CD4-positive, alpha-beta memory T cell (primary cell): ENCODE measurements at regions of chr11 and their contacts with region 1.

Region 1: DNA sequence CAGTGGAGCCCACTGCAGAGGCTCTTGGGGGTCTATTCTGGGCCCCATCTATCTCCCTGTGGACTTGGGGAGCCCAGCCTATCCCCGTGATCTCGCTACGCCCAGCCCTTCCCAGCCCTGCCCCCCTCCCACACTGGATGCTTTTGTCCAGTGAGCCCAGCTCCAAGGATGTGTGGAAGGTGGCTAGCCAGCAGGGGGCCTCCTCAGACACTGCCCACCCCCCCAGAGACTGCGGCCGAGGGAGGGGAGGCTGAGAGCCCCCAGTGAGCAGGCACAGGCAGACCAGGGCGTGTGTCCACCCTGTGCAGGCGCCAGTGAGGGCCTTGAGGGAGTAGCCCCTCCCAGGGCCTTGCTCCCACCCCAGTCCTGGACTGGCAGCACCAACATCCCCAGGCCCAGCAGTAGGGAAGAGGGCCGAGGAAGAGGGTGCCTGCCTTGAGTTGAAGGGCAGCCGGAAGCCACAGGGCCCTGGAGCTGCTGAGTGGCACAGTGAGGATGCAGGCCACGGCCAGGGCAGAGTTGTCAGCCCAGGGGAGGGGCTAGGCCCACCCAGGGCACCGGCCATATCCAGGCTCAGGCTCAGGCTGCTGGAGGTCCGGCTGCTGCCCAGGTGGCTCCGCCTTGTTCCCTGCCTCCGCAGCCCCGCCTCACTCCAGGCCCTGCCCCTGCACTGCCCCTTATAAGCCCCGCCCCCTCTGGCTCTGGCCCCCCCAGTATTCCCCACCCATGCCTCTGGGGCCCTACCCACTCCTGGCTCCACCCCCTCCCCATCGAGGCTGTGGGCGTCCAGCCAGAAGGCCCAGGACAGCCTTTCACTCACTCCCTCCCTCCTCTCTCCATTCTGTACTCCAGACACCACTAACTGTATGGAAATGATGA is 28.0 kb downstream of the MOB2 start:
- DNase-seq: no peak
- H3K4me3 ChIP-seq: no peak overlapping the region
- H3K4me3 Mint-ChIP-seq: no peak overlapping the region
- H3K27ac ChIP-seq: no peak overlapping the region
- H3K27ac Mint-ChIP-seq: no peak overlapping the region
- H3K4me1 ChIP-seq: no peaks in the 10 kb centered on the region
- H3K4me1 Mint-ChIP-seq: no peaks in the 10 kb centered on the region
- H3K27me3 ChIP-seq: no peaks in the 10 kb centered on the region
- H3K27me3 Mint-ChIP-seq: no peaks in the 10 kb centered on the region

Region 2: DNA sequence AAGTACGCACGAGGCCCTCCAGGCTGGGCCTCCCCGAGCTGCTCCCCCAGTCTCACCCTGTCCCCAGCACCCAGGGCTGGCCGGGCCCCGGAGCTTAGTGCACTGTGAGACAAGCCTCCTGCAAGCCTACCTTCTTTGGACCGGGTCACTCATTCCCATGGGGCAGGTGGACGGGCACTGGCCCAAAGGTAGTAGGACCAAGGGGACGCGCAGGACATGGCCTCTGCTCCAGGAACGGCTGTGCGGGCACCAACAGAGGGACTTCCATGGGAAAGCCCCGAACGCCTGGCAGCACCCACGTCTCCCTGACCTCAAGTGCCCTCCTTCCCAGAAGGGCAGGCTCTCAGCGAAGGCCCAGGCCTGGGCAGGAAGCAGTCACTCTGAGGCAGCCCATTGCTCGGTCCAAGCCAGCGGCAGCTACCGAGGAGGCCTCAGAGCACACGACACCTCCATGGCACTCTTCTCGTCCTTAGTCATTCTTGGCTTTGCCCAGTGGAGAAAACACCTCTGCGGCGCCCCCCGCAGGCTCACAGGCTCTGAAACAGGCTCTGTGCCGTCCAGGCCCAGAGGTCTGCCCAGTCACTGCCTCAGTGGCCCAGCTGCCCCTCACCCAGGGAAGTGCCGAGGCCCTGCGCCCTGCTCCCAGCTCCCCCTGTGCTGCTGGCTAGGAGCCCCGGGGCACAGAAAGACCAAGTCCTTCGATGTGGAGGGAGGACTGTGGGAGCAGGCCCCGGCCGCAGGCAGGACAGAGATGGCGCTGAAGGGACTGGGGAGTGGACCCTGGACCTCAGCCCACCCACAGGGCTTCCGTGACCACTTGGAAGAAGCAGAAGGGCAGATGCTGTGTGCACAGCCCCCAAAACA is 24.2 kb after region 1 on chr11:
- CTCF ChIA-PET with region 1: no interaction called
- POLR2A ChIA-PET with region 1: no interaction called
- intact Hi-C with region 1: no loop called
- DNase-seq: no peak
- H3K4me3 ChIP-seq: no peak overlapping the region
- H3K4me3 Mint-ChIP-seq: no peak overlapping the region
- H3K27ac ChIP-seq: no peak overlapping the region
- H3K27ac Mint-ChIP-seq: no peak overlapping the region
- H3K4me1 ChIP-seq: peaks cover 27% of the 10 kb centered on the region
- H3K4me1 Mint-ChIP-seq: peaks cover 9 to 33% (median 22%) of the 10 kb centered on the region in 4 donors
- H3K27me3 ChIP-seq: no peaks in the 10 kb centered on the region
- H3K27me3 Mint-ChIP-seq: no peaks in the 10 kb centered on the region

Region 3: GRCh38 chr11:1515082-1516060 is 56.8 kb after region 1 on chr11:
- CTCF ChIA-PET with region 1: no interaction called
- POLR2A ChIA-PET with region 1: no interaction called
- intact Hi-C with region 1: loop called (anchors 1 kb)
- DNase-seq: peak; percentile 55 to 69 (median 55)
- H3K4me3 ChIP-seq: no peak overlapping the region
- H3K4me3 Mint-ChIP-seq: peak overlapping the region in 2 of 8 donors; percentile 34 to 52
- H3K27ac ChIP-seq: no peak overlapping the region
- H3K27ac Mint-ChIP-seq: peak overlapping the region in 4 of 7 donors; percentile 3 to 84 (median 44)
- H3K4me1 ChIP-seq: peaks cover 57% of the 10 kb centered on the region
- H3K4me1 Mint-ChIP-seq: peaks cover 46 to 87% (median 70%) of the 10 kb centered on the region in 4 donors
- H3K27me3 ChIP-seq: no peaks in the 10 kb centered on the region
- H3K27me3 Mint-ChIP-seq: no peaks in the 10 kb centered on the region